Gastrocnemius medialis (tissue), 4 donors: ENCODE measurements at regions of chrX and their contacts with region 1.

Region 1: GRCh38 chrX:48801280-48802088 is at the start of gene HDAC6:
- DNase-seq: peak; percentile 93 to 98
- ATAC-seq: peak; percentile 85 to 87
- H3K4me3 ChIP-seq: peak within 1 kb of the TSS; percentile 65 to 74 (median 72)
- H3K27ac ChIP-seq: peak within 1 kb of the TSS; percentile 90 to 99 (median 96)
- H3K4me1 ChIP-seq: peaks cover 5 to 6% of the 10 kb centered on the region in 2 donors
- H3K27me3 ChIP-seq: no peaks in the 10 kb centered on the region
- CTCF ChIP-seq: no peak
- POLR2A ChIP-seq: peak in 1 of 2 donors; percentile 6
- total RNA-seq, gene HDAC6: 38.2 to 92.2 (median 61.3) TPM

Region 2: DNA sequence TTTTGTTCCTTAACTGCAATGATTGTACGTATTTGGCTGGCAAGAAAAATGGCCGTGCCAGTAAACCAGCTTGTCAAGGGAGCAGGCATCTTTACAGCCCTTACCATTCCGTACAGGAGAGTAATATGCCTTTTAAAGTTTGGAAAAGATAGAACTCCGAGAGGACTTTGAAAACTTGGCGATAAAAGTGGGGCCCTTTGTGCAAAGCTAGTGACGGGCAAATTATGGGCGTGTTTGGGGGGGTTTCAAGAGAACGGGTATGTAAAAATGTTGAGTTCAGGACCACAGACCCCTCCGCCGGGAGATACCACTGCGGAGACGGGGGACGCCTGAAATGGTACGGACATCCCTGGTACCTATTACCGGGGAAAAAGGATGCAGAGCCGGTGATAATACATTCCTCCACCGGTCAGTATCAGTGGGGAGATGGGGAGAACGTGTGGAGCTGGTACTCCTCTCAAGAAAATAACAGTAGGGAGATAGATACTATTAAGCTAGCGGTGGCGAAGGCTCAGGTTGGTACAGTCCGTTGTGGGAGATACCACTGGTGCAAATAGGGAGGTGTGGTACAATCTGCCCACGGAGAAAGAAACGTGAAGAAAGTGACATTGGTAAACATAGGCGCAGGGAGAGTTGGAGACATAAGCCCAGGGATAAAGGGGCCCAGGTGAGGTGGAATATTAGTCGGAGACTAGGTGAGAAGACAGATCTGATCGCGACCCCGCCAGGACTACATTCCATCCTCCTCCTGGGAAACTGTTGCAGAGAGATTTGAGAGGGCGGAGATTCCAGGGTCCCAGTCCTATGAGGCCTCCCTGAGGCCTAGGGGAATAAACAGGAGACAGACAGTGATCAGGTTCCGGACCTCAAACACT is 780.2 kb before region 1 on chrX:
- in situ Hi-C with region 1: no loop called
- intact Hi-C with region 1: loop called (anchors 10 kb)
- DNase-seq: peak; percentile 32 to 60
- ATAC-seq: peak; percentile 90
- H3K4me3 ChIP-seq: peak overlapping the region; percentile 61 to 68 (median 64)
- H3K27ac ChIP-seq: peak overlapping the region; percentile 82 to 91 (median 86)
- H3K4me1 ChIP-seq: peaks cover 0 to 4% of the 10 kb centered on the region in 2 donors
- H3K27me3 ChIP-seq: no peaks in the 10 kb centered on the region
- CTCF ChIP-seq: no peak
- POLR2A ChIP-seq: no peak

Region 3: DNA sequence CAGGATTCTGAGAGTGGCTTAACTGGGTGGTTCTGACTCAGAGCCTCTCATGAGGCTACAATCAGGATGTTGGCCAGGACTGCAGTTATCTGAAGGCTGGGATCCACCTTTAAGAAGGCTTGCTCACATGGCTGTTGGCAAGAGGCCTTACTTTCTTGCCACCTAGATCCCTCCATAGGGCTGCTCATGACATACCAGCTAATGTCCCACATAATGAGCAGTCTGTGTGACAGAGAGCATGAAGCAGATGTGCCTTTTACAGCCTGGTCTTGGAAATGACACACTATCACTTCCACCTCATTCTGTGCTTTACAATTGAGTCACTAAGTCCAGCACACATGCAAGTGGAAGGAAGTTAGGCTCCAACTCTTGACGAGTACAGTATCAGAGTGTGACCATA is 231.5 kb before region 1 on chrX:
- in situ Hi-C with region 1: no loop called
- intact Hi-C with region 1: no loop called
- DNase-seq: no peak
- ATAC-seq: no peak
- H3K4me3 ChIP-seq: no peak overlapping the region
- H3K27ac ChIP-seq: no peak overlapping the region
- H3K4me1 ChIP-seq: no peaks in the 10 kb centered on the region
- H3K27me3 ChIP-seq: no peaks in the 10 kb centered on the region
- CTCF ChIP-seq: no peak
- POLR2A ChIP-seq: no peak

Region 4: DNA sequence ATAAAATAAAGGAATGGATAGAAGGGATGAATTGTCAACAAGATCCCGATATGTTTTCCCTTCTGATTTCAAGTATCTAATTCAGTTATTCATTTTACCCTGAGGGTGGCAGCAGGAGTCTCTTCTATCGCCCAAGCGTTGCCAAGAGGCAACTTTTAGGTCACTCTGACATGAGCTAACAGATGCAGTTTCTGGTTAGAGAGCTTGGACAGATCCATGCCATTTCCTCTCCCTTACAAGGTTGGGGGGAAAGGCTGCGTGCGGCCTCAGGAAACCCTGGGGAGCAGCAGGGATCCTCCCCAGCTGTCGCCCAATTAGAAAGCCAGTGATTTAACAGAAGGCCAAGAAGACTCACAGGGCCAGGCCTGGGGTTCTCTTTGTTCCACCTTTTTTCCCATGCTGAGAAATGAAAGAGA is 153.1 kb before region 1 on chrX:
- in situ Hi-C with region 1: loop called in 1 of 4 experiments (anchors 25 kb)
- intact Hi-C with region 1: loop called (anchors 2 kb)
- DNase-seq: peak; percentile 4 to 29
- ATAC-seq: peak; percentile 76 to 91
- H3K4me3 ChIP-seq: no peak overlapping the region
- H3K27ac ChIP-seq: peak overlapping the region in 3 of 4 donors; percentile 23 to 63 (median 33)
- H3K4me1 ChIP-seq: peaks cover 0 to 4% of the 10 kb centered on the region in 2 donors
- H3K27me3 ChIP-seq: peaks cover 0 to under 1% (median 0%) of the 10 kb centered on the region in 3 donors
- CTCF ChIP-seq: peak in 2 of 5 experiments; percentile 26 to 35
- POLR2A ChIP-seq: no peak

Region 5: GRCh38 chrX:48696301-48697181 is 104.9 kb before region 1 on chrX and contains the start of gene SUV39H1:
- in situ Hi-C with region 1: no loop called
- intact Hi-C with region 1: loop called (anchors 1 kb)
- DNase-seq: peak; percentile 78 to 89
- ATAC-seq: peak; percentile 95
- H3K4me3 ChIP-seq: peak within 1 kb of the TSS; percentile 60 to 66 (median 61)
- H3K27ac ChIP-seq: peak within 1 kb of the TSS; percentile 91 to 96 (median 95)
- H3K4me1 ChIP-seq: no peaks in the 10 kb centered on the region
- H3K27me3 ChIP-seq: no peaks in the 10 kb centered on the region
- CTCF ChIP-seq: no peak
- POLR2A ChIP-seq: peak; percentile 79 to 86
- total RNA-seq, gene SUV39H1: 1.7 to 6.1 (median 3.3) TPM

Region 6: DNA sequence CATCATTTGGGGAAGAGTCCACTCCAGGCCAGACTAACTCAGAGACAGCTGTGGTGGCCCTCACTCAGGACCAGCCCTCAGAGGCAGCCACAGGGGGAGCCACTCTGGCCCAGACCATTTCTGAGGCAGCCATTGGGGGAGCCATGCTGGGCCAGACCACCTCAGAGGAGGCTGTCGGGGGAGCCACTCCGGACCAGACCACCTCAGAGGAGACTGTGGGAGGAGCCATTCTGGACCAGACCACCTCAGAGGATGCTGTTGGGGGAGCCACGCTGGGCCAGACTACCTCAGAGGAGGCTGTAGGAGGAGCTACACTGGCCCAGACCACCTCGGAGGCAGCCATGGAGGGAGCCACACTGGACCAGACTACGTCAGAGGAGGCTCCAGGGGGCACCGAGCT is 21.6 kb after region 1 on chrX:
- in situ Hi-C with region 1: no loop called
- intact Hi-C with region 1: no loop called
- DNase-seq: no peak
- ATAC-seq: no peak
- H3K4me3 ChIP-seq: no peak overlapping the region
- H3K27ac ChIP-seq: no peak overlapping the region
- H3K4me1 ChIP-seq: no peaks in the 10 kb centered on the region
- H3K27me3 ChIP-seq: no peaks in the 10 kb centered on the region
- CTCF ChIP-seq: no peak
- POLR2A ChIP-seq: no peak

Region 7: DNA sequence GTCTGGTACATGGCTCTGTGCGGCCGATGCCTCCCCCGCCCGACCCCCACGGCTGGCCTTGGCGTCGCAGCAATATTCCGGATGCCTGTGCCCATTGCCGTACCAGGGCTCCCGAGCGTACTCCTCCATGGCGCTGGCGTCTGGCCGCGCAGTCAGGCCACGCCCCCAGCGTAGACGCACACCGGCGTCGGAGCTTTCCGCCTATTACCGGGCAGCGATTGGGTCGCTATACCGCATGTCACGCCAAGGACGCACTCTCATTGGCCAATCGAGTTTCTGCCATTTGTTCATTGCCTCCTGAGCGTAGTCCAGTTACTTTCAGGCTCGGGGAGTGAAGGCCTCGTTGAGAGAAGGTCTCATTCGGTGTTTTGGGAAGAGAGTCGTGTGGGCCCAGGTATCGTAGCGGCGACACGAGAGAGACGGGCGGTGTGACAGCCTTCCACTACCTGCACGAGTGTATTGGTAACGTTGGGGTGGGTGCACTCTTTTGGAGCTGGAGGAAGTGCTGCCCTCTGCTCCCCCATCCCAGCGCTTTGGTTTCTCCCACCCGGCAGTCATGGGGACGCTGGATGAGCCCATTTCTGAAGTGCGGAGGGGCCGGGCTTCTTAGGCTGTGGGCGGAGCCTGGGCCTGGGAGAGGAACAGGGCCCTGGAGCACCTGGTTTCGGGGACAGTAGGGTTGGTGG is 96.3 kb after region 1 on chrX and contains the starts of genes PQBP1 and TIMM17B:
- in situ Hi-C with region 1: loop called in 1 of 4 experiments (anchors 10 kb)
- intact Hi-C with region 1: loop called (anchors 1 kb)
- DNase-seq: peak; percentile 87 to 92
- ATAC-seq: peak; percentile 95 to 97
- H3K4me3 ChIP-seq: peak within 1 kb of the TSS; percentile 62 to 79 (median 72)
- H3K27ac ChIP-seq: peak within 1 kb of the TSS; percentile 90 to 98 (median 95)
- H3K4me1 ChIP-seq: peaks cover 0 to 12% of the 10 kb centered on the region in 2 donors
- H3K27me3 ChIP-seq: no peaks in the 10 kb centered on the region
- CTCF ChIP-seq: no peak
- POLR2A ChIP-seq: peak; percentile 76 to 88
- total RNA-seq, gene PQBP1: 61.3 to 90.4 (median 67.8) TPM
- total RNA-seq, gene TIMM17B: 53.3 to 103 (median 68.5) TPM

Region 8: GRCh38 chrX:49120099-49120498 is 318.6 kb after region 1 on chrX:
- in situ Hi-C with region 1: no loop called
- intact Hi-C with region 1: loop called (anchors 5 kb)
- DNase-seq: no peak
- ATAC-seq: no peak
- H3K4me3 ChIP-seq: no peak overlapping the region
- H3K27ac ChIP-seq: no peak overlapping the region
- H3K4me1 ChIP-seq: peaks cover 2 to 6% of the 10 kb centered on the region in 2 donors
- H3K27me3 ChIP-seq: no peaks in the 10 kb centered on the region
- CTCF ChIP-seq: no peak
- POLR2A ChIP-seq: no peak